ENCODE measurements at regions of chr2 and their contacts with region 1.

Region 1: DNA sequence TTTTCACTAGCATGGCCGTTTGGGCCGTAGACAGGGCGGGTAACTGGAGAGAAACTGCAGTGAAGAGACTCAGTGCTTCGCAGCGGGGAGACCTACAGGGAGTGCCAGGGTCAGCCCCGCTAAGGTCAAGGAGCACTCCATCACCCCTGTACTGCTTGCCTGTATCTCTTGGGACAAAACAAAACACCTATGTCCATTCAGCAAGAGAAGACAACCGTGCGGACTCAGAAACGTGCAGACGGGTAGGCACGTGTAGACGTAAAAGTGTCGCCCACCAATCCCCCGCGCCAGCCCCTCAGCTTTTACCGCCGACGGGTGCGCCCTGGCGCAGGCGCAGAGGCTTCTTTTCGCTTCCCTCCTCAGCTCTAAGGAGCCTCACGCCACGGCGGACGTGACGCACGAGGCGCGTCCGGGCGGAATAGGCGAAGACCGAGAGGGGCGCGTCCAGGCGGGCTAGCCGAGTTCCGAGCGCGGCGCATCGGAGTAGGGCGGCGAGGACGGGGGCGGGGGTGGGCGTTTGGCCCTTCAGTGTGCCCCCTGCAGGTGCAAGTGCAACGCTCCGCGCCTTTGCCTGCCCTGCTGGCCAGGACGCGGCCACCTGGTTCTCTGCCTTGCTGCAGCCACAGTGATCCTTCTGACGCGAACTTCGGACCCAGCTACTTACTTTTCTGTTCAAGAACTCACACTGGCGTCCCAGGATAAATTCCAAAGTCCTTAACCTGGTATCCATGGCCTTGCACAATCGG is 3.3 kb upstream of the SOS1 start:
- DNase-seq: peak; percentile 63
- H3K4me3 ChIP-seq: peak overlapping the region; percentile 75
- H3K27me3 ChIP-seq: no peaks in the 10 kb centered on the region
- CTCF ChIP-seq: peak; percentile 69

Region 2: GRCh38 chr2:39059366-39059952 is 64.7 kb before region 1 on chr2:
- CTCF ChIA-PET with region 1: interaction called, 12 read pairs
- POLR2A ChIA-PET with region 1: no interaction called
- DNase-seq: peak; percentile 10
- H3K4me3 ChIP-seq: no peak overlapping the region
- H3K27me3 ChIP-seq: no peaks in the 10 kb centered on the region
- CTCF ChIP-seq: peak; percentile 49

Region 3: DNA sequence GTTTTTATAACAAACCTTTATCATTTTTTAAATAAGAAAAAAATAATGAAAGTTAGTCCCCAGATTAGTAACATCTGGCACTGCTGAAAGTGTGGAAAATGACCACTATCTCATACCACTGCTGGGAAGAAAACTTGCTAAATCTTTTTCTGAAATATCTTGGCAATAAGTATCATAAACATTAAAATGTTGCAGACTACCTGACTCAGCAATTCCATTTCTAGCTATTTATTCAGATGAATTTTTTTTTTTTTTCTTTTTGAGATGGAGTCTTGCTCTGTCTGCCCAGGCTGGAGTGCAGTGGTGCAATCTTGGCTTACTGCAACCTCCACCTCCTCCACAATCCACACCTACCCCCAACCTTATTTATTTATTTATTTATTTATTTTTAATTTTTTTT is 31.9 kb after region 1 on chr2:
- CTCF ChIA-PET with region 1: no interaction called
- POLR2A ChIA-PET with region 1: interaction called, 12 read pairs
- DNase-seq: peak; percentile 7
- H3K4me3 ChIP-seq: no peak overlapping the region
- H3K27me3 ChIP-seq: no peaks in the 10 kb centered on the region
- CTCF ChIP-seq: no peak

Region 4: DNA sequence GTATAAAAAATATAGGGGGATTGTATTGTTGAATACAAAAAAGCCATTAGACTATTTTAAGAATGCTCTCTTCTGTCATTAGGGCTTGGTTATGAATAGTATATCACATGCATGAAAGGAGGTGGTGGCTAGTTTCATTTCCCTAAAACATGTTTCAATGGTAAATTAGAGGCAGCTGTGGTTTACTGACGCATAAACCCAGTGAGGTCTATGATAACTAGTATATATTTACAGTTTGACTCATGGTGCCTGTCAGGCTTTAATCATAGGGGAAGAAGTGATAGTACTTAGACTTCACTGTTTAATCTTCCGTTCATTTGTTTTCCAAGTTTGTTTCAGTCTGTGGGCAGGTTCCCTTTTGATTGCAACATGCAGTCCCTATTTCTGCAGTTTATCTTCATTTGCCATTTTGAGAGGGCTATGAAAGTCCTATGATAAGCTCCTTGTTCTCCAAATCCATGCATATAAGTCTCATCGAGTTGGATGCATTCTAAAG is 368.0 kb after region 1 on chr2:
- CTCF ChIA-PET with region 1: no interaction called
- POLR2A ChIA-PET with region 1: no interaction called
- DNase-seq: peak; percentile 83
- H3K4me3 ChIP-seq: no peak overlapping the region
- H3K27me3 ChIP-seq: no peaks in the 10 kb centered on the region
- CTCF ChIP-seq: no peak